Testis (tissue), 5 donors: ENCODE measurements at regions of chr10 and their contacts with region 1.

Region 1: DNA sequence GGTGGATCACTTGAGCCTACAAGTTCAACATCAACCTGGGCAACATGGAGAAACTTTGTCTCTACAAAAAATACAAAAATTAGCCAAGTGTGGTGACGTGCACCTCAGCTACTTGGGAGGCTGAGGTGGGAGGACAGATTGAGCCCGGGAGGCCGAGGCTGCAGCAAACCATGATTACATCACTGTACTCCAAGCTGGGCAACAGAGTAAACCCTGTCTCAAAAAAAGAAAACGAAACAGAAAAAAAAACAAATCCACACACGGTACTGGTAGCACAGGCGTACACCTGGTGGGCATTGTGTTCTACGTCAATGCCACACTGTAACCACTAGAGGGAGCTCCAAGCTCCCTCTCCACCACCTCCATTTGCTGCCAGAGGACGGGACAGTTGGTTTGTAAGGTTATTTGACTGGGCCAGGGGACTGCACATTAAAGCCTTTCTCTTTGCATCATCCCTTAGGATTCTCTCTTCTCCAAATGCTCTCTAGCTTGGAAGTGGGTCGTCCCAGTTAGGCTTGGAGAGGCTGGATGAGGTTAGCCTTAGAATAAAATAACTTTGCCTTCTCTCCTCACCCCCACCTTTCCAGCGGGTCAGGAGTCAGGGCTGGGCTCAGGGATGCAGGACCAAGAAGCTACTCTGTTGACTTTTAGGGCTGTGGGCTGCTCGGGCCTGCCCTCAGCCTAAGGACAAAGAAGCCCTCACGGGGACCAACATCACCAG is 130.8 kb downstream of the SORBS1 start:
- DNase-seq: peak; percentile 61
- H3K4me3 ChIP-seq: no peak overlapping the region
- H3K27ac ChIP-seq: no peak overlapping the region
- H3K4me1 ChIP-seq: no peaks in the 10 kb centered on the region
- H3K27me3 ChIP-seq: no peaks in the 10 kb centered on the region
- CTCF ChIP-seq: peak; percentile 87 to 96 (median 91)
- POLR2A ChIP-seq: no peak

Region 2: GRCh38 chr10:95601116-95601719 is 170.8 kb after region 1 on chr10:
- intact Hi-C with region 1: loop called (anchors 5 kb)
- DNase-seq: peak; percentile 85
- H3K4me3 ChIP-seq: no peak overlapping the region
- H3K27ac ChIP-seq: no peak overlapping the region
- H3K4me1 ChIP-seq: no peaks in the 10 kb centered on the region
- H3K27me3 ChIP-seq: no peaks in the 10 kb centered on the region
- CTCF ChIP-seq: peak; percentile 70 to 83 (median 74)
- POLR2A ChIP-seq: no peak

Region 3: DNA sequence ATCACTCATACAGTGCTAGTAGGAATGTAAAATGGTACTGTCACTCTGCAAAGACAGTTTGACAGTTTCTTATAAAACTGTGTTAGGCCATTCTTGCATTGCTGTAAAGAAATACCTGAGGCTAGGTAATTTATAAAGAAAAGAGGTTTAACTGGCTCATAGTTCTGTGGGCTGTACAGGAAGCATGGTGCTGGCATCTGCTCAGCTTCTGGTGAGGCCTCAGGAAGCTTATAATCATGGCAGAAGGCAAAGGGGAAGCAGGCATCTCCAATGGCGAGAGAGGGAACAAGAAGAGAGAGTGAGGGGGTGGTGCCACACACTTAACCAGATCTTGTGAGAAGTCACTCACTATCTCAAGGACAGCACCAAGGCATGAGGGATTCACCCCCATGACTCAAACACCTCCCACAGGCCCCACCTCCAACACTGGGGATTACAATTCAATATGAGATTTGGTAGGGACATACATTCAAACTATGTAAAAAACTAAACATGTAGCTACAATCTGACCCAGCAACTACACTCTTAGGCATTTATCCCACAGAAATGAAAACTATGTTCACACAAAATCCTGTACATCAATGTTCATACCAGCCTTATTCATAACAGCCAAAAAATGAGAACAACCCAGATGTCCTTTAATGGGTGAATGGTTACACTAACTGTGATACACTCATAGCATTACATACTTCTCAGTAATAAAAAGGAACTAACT is 221.1 kb after region 1 on chr10:
- intact Hi-C with region 1: no loop called
- DNase-seq: no peak
- H3K4me3 ChIP-seq: no peak overlapping the region
- H3K27ac ChIP-seq: no peak overlapping the region
- H3K4me1 ChIP-seq: peaks cover 4% of the 10 kb centered on the region
- H3K27me3 ChIP-seq: no peaks in the 10 kb centered on the region
- CTCF ChIP-seq: no peak
- POLR2A ChIP-seq: no peak